Activated CD8-positive, alpha-beta T cell treated with anti-CD3 and anti-CD28 coated beads, Interleukin-2, amount 10 ng/mL, durations not matched to agents 7 days and 5 days (primary cell): ENCODE measurements at regions of chr5 and their contacts with region 1.

Region 1: DNA sequence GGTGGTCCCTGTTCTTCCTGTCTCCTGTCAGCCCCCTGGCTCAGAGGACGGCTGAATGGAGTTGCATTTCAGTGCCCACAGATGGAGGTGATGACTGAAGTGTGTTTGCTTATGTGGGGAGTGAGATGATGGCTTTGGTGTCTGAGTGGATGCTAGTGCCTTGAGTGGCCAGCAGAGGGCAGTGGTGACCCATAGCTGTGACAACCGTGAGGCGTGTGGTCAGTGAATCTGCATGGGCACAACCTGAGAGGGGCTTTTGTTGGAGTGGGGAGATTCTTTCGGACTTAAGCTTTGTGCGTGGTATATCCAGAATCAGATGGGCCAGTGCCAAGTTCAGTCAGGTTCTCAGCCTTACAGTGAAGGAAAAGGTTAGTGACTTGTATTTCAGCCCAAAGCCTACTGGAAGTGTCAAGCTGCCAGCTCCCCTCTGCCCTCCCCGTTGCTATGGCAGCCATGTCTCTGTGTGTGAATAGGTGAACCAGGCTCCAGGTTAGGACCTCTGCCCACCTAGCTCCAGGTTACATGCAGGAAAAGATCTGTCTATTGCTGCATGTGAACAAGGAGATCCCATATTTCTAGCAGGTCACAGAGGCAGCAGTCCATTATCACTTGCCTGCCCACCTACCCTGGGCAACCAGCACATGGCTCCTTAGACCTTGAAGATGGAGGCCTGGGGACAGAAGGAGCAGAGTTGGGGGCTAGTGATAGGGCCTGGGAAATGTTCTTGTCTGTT is 14.7 kb upstream of the CXXC5 start:
- DNase-seq: peak; percentile 78
- ATAC-seq: peak; percentile 43
- H3K4me3 Mint-ChIP-seq: no peak overlapping the region
- H3K27ac Mint-ChIP-seq: peak overlapping the region; percentile 44
- H3K4me1 Mint-ChIP-seq: peaks cover 41% of the 10 kb centered on the region
- H3K27me3 Mint-ChIP-seq: no peaks in the 10 kb centered on the region

Region 2: GRCh38 chr5:139149477-139150199 is 483.8 kb before region 1 on chr5:
- CTCF ChIA-PET with region 1: no interaction called
- POLR2A ChIA-PET with region 1: no interaction called
- DNase-seq: no peak
- ATAC-seq: no peak
- H3K4me3 Mint-ChIP-seq: no peak overlapping the region
- H3K27ac Mint-ChIP-seq: no peak overlapping the region
- H3K4me1 Mint-ChIP-seq: peaks cover 2% of the 10 kb centered on the region
- H3K27me3 Mint-ChIP-seq: no peaks in the 10 kb centered on the region

Region 3: DNA sequence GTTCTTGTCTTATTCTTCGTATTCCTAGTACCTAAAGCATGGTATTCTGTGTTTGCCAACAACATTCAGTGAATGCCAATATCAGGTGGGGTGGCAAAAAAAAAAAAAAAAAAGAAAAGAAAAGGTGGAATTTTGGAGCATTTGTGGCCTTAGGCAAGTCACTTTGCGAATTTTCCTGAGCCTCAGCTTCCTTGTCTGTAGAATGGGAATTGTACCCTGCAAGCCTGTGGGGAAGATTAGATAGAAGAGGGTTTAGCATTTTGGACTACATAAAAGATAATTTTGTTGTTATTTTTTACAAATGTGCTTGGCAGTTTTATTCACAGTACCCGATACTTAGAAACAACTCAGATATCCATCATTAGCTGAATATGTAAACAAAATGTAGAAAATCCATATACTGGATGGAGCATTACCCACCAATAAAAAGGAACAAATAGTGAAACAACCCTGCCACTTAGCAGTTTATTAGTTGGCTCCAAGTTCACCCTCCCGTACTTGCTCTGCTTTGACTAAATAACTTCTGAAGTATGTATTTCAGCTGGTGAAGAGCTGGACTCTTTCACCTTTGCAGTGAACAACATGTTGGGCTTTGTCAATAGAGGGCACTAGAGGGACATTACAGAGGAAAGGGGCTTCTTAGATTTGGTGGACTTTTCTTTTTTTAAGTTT is 58.7 kb before region 1 on chr5:
- CTCF ChIA-PET with region 1: interaction called, 59 read pairs
- POLR2A ChIA-PET with region 1: interaction called, 4 read pairs
- DNase-seq: peak; percentile 49
- ATAC-seq: peak; percentile 35
- H3K4me3 Mint-ChIP-seq: no peak overlapping the region
- H3K27ac Mint-ChIP-seq: peak overlapping the region; percentile 26
- H3K4me1 Mint-ChIP-seq: peaks cover 73% of the 10 kb centered on the region
- H3K27me3 Mint-ChIP-seq: no peaks in the 10 kb centered on the region

Region 4: GRCh38 chr5:139644661-139645429 is 11.4 kb after region 1 on chr5:
- CTCF ChIA-PET with region 1: interaction called, 100 read pairs
- POLR2A ChIA-PET with region 1: interaction called, 12 read pairs
- DNase-seq: no peak
- ATAC-seq: no peak
- H3K4me3 Mint-ChIP-seq: no peak overlapping the region
- H3K27ac Mint-ChIP-seq: no peak overlapping the region
- H3K4me1 Mint-ChIP-seq: peaks cover 37% of the 10 kb centered on the region
- H3K27me3 Mint-ChIP-seq: peaks cover 29% of the 10 kb centered on the region

Region 5: GRCh38 chr5:139676951-139677735 is 43.7 kb after region 1 on chr5:
- CTCF ChIA-PET with region 1: interaction called, 95 read pairs
- POLR2A ChIA-PET with region 1: interaction called, 3 read pairs
- DNase-seq: no peak
- ATAC-seq: no peak
- H3K4me3 Mint-ChIP-seq: no peak overlapping the region
- H3K27ac Mint-ChIP-seq: no peak overlapping the region
- H3K4me1 Mint-ChIP-seq: no peaks in the 10 kb centered on the region
- H3K27me3 Mint-ChIP-seq: no peaks in the 10 kb centered on the region

Region 6: DNA sequence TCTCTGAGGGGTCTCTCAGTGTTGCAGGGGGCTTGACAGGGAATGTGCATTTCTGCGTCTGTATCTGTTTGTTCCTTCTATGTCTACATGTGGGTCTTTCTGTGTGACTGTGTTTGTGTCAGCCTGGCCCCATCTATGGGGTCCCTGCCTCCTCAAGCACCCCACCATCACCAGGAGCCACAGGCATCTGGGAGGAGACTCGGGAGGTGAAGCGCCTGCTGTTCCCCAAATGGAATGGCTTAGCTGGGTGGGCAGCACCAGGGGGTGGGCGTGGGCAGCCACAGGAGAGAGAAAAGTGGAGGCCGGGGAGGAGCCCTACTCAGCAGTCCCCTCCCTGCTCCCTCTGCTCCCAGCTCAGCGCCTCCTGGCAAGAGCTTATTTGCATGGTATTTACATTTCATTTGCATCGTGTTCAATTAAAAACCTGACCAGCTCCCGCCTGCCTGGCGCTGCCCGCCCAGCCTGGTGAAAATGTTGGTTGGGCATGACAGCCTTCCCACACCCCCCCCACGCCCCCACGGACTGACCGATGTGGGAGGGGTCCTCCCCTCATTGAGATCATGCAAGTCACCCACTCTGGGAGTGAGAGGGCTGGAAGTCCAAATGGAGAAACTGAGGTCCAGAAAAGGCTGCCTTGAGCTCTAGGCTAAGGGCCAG is 65.2 kb after region 1 on chr5:
- CTCF ChIA-PET with region 1: interaction called, 185 read pairs
- POLR2A ChIA-PET with region 1: interaction called, 4 read pairs
- DNase-seq: no peak
- ATAC-seq: no peak
- H3K4me3 Mint-ChIP-seq: no peak overlapping the region
- H3K27ac Mint-ChIP-seq: peak overlapping the region; percentile 30
- H3K4me1 Mint-ChIP-seq: peaks cover 53% of the 10 kb centered on the region
- H3K27me3 Mint-ChIP-seq: peaks cover 13% of the 10 kb centered on the region